ENCODE measurements at regions of chr6 and their contacts with region 1.

Region 1: GRCh38 chr6:89352278-89353117 is at the start of gene UBE2J1:
- DNase-seq: peak; percentile 57
- ATAC-seq: peak; percentile 93
- H3K4me3 ChIP-seq: peak within 1 kb of the TSS; percentile 64 to 71
- H3K27ac ChIP-seq: peak within 1 kb of the TSS; percentile 79
- H3K4me1 ChIP-seq: peaks cover 14 to 25% of the 10 kb centered on the region in 2 experiments
- H3K27me3 ChIP-seq: no peaks in the 10 kb centered on the region
- CTCF ChIP-seq: no peak
- POLR2A ChIP-seq: peak; percentile 64
- RAD21 ChIP-seq: no peak
- total RNA-seq, gene UBE2J1: 23.3 TPM

Region 2: DNA sequence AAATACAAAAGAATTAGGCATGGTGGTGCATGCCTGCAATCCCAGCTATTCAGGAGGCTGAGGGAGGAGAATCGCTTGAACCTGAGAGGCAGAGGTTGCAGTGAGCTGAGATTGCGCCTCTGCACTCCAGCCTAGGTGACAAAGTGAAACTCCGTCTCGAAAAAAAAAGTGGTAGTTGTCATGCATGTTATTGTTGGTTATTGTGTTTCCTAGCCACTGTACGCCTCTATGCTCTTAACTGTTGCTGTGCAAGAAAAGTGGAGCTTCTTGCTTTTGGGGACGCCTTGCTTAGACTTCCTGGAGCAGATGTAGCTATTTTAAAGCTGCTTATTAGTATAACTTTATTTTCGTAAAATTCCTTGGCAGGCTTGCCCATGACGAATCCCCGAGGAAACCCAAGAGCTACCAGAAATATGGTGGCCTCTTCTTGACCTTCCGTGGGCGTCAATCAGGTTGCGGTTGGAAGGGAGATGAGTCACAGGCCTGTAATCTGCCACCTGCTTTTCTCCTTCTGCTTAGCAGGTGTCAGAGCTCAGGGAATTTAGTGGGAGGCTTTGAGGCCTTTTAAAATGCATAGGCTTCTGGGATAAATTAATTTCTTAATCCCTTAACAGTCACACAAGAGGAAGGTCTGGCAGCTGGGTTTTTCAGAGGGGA is 54.7 kb before region 1 on chr6:
- CTCF ChIA-PET with region 1: no interaction called
- POLR2A ChIA-PET with region 1: interaction called, 3 read pairs
- RAD21 ChIA-PET with region 1: interaction called in 1 of 2 experiments, 3 read pairs
- intact Hi-C with region 1: loop called (anchors 5 kb)
- DNase-seq: peak; percentile 94
- ATAC-seq: peak; percentile 86
- H3K4me3 ChIP-seq: peak overlapping the region; percentile 42 to 59
- H3K27ac ChIP-seq: peak overlapping the region; percentile 36
- H3K4me1 ChIP-seq: peaks cover 20 to 33% of the 10 kb centered on the region in 2 experiments
- H3K27me3 ChIP-seq: peaks cover 11% of the 10 kb centered on the region; the same call in 1 of the 2 replicates
- CTCF ChIP-seq: no peak
- POLR2A ChIP-seq: no peak
- RAD21 ChIP-seq: no peak

Measured in HCT116 (cell line).